ENCODE measurements at regions of chr22 and their contacts with region 1.

Region 1: GRCh38 chr22:37862570-37863325 is 13.5 kb downstream of the EIF3L start:
- DNase-seq: no peak

Region 2: DNA sequence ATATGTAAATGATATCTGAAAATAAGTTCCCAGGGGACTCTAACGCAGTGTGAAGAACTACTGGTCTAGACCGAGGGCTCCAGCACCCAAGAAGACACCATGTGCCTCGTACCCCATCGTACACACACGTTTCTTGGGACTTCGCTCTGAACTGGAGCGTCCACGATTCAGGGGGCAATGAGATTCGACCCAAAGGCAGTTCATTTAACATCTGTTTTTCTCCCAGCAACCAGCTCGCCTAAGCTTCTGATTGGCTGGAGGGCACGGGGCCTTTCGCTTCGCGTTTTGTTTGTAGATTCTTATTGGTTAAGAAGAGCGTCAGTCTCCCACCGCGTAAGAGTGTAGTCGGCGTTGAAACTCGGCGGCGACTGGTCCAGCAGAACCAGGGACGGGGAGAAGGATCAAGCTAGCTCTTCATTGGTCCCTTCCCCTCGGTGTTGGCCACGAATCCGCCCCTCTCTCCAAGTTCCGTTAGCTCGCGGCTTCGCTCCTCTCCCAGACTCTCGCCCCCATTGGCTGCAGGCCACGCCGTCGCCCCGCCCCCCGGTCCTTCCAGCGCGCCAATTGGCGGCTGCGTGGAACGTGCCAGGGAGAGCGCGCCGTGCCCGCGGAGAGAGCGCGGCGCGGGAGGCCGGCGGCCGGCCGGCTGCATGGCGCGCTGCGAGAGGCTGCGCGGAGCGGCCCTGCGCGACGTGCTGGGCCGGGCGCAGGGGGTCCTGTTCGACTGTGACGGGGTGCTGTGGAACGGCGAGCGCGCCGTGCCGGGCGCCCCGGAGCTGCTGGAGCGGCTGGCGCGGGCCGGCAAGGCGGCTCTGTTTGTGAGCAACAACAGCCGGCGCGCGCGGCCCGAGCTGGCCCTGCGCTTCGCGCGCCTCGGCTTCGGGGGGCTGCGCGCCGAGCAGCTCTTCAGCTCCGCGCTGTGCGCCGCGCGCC is 204.3 kb before region 1 on chr22 and contains the start of gene PDXP:
- intact Hi-C with region 1: loop called in 1 of 2 experiments (anchors 10 kb)
- DNase-seq: peak; percentile 100
- total RNA-seq, gene PDXP: 5.0 to 5.4 TPM